Esophagus squamous epithelium (tissue), 5 donors: ENCODE measurements at regions of chr13 and their contacts with region 1.

Region 1: GRCh38 chr13:24574847-24575246 is 62.3 kb upstream of the PARP4 start:
- DNase-seq: no peak
- H3K4me3 ChIP-seq: no peak overlapping the region
- H3K27ac ChIP-seq: no peak overlapping the region
- H3K4me1 ChIP-seq: no peaks in the 10 kb centered on the region
- H3K27me3 ChIP-seq: peaks cover 0 to 18% (median 0%) of the 10 kb centered on the region in 4 donors
- CTCF ChIP-seq: no peak
- POLR2A ChIP-seq: no peak

Region 2: DNA sequence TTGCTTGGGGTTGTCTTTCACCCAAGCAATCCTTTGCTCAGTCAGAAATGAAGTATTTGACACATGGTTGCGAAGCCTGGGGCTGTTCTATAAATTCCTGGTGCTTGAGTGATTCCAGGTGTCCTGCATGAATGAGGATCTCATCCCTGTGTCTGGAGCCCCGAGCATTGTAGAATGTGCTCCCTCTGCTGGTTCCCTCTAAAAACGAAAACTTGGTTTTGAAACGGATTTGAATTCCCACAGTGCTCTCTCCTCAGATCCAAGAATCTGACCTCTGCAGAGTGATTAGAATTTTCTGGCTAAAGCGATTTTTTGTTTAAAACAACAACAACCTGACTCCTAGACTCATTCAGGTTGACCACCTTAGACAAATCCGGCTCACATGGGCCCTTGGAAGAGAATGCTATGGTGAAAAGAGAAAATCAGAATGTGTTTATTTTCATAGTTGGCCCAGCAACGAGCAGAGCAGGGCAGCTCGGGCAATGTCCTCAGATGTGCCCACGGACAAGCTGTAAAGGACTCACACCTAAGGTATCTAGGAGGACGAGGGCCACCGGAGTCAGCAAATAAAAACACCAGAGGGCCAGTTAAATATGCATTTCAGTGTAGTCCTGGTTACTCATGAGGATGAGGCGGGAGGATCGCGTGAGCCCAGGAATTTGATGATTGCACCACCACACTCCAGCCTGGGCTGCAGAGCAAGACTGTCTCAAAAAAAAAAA is 96.7 kb after region 1 on chr13:
- intact Hi-C with region 1: loop called (anchors 10 kb)
- DNase-seq: no peak
- H3K4me3 ChIP-seq: peak overlapping the region in 2 of 4 donors; percentile 8 to 46
- H3K27ac ChIP-seq: peak overlapping the region in 3 of 4 donors; percentile 41 to 73 (median 73)
- H3K4me1 ChIP-seq: peaks cover 5 to 38% (median 10%) of the 10 kb centered on the region in 3 donors
- H3K27me3 ChIP-seq: peaks cover 0 to 23% (median 0%) of the 10 kb centered on the region in 4 donors
- CTCF ChIP-seq: peak in 5 of 6 experiments; percentile 49 to 71 (median 56)
- POLR2A ChIP-seq: no peak